Thyroid gland (tissue), 4 donors: ENCODE measurements at regions of chr2 and their contacts with region 1.

Region 1: DNA sequence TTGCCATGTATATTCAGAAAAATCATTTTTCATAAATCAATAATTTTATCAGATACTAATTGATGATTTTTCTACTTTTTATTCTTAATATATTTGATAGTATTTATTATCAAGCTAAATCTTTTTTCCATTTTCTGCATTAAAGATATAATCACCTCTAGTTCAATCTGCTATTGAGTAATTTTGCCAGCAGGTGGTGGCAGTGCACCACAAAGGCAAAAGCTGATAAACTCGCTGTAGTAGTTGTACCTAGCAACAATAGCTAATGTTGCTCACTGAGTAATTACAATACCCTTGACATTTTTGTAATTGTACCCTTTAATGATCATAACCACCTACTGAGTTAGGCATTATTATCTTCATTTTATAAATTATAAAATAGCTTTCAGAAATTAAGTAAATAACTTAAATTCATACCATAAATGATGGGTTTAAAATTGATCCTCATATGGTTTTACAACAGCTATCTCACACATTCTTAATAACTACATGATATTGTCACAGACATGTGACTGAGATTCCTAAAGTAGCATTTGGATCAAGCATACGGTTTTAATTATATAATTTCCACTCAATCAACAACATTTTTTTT is 52.0 kb upstream of the CALCRL start:
- DNase-seq: peak; percentile 47 to 62
- H3K4me3 ChIP-seq: no peak overlapping the region
- H3K27ac ChIP-seq: no peak overlapping the region
- H3K4me1 ChIP-seq: no peaks in the 10 kb centered on the region
- H3K27me3 ChIP-seq: no peaks in the 10 kb centered on the region
- CTCF ChIP-seq: peak; percentile 39 to 87 (median 77)
- POLR2A ChIP-seq: no peak

Region 2: DNA sequence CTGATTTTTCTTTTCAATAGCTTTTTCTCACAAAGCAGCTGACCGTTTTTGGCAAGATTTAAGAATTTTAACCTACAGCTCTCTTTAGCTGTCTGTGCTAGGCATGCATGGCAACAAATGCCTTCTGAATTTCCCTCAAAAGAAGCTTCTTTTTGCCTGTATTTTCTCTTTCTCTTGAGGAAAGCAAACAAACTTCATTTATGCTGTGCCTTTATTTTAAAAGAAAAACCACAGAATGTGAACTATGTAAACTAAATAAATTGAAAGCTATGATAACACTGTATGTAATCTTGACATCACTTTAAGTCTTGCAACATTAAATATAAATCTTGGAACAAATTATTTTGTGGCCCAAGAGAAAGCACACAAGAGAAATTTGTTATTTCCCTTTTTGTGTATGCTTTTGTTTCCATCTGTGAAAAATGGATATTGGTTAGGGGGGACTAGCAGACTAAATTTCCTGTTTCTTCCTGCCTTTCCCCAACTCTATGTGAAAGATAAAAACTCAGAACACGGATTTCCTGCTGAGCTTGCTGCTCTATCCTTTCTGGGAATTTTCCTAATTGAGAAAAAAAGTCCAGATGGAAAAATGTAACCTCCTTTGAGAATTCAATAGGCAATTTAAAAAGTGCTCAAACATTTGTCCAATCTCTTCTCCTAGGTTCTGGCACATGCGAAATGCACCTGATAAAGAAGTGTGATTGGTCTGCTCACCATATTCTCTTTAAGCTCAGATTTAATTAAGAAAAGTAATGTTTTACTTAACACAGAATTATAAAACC is 75.1 kb after region 1 on chr2:
- intact Hi-C with region 1: loop called (anchors 10 kb)
- DNase-seq: no peak
- H3K4me3 ChIP-seq: no peak overlapping the region
- H3K27ac ChIP-seq: peak overlapping the region in 2 of 3 donors; percentile 26 to 36
- H3K4me1 ChIP-seq: peaks cover 0 to 9% of the 10 kb centered on the region in 2 donors
- H3K27me3 ChIP-seq: no peaks in the 10 kb centered on the region
- CTCF ChIP-seq: no peak
- POLR2A ChIP-seq: no peak

Region 3: DNA sequence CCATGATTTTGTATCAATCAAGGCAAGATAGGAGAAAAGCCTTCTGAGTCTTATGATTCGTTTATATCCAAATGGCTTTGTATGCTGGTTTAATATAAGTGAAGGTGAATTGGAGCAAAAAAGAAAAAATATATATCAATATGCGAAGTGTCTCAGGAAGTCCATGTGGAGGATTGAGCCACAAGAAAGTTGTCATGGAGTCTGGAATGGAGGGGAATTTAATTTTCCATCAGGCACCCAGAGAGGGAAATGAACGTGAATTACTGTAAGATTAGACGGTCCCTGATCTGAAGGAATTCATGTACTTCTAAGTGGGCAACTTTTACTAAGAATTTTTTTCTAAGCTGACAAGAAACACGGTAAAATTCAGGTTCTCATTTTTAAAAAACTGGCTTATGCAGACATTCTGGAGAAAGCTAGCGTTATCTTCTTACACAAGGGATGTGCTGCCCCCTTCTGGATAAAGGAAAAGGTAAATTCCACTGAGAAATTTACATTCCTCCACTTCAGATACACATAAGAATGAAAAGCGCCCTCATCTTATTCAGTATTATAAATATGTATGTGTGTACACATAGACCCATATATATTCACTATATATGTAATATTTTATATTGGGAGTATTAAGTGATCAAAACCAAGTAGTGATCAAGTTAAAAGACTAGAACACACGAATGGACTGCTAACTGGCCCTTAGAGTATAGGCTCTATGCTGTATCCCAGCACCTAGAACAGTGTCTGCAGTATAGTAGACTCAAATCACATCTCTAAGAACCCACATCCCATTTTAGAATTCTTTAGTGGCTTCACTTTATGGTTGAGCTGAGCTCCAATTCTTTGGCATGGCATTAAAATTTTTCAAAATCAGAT is 343.2 kb after region 1 on chr2:
- intact Hi-C with region 1: loop called (anchors 10 kb)
- DNase-seq: no peak
- H3K4me3 ChIP-seq: no peak overlapping the region
- H3K27ac ChIP-seq: no peak overlapping the region
- H3K4me1 ChIP-seq: no peaks in the 10 kb centered on the region
- H3K27me3 ChIP-seq: no peaks in the 10 kb centered on the region
- CTCF ChIP-seq: peak in 5 of 6 experiments; percentile 12 to 70 (median 65)
- POLR2A ChIP-seq: no peak